Activated CD4-positive, alpha-beta T cell treated with anti-CD3 and anti-CD28 coated beads, Interleukin-2, amount 10 ng/mL, durations not matched to agents 24 days and 14 days (primary cell): ENCODE measurements at regions of chr7 and their contacts with region 1.

Region 1: GRCh38 chr7:47088329-47089067 is 493.4 kb downstream of the TNS3 start:
- DNase-seq: peak; percentile 65
- H3K4me3 Mint-ChIP-seq: no peak overlapping the region
- H3K27ac Mint-ChIP-seq: no peak overlapping the region
- H3K4me1 Mint-ChIP-seq: no peaks in the 10 kb centered on the region
- H3K27me3 Mint-ChIP-seq: no peaks in the 10 kb centered on the region

Region 2: GRCh38 chr7:45890902-45891461 is 1197.5 kb before region 1 on chr7:
- intact Hi-C with region 1: loop called (anchors 5 kb)
- DNase-seq: no peak
- H3K4me3 Mint-ChIP-seq: no peak overlapping the region
- H3K27ac Mint-ChIP-seq: no peak overlapping the region
- H3K4me1 Mint-ChIP-seq: no peaks in the 10 kb centered on the region
- H3K27me3 Mint-ChIP-seq: peaks cover 46% of the 10 kb centered on the region

Region 3: DNA sequence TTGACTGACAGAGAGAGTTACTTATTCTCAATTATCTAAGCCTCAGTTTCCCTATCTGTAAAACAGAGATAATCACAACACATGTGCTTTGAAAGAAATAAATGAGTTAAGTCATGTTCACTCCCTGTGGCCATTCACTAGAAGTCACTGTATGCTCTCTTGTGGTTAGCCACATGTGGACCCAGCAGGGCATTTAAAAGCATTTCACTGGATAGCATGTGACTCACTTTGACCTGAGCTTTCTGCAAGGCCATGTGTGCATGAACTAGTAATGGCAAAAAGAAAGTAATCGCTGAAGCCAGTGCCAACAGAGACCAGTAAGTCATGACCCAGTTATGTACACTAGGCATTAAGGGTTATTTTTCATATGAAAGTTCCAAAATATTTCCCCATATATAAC is 610.5 kb before region 1 on chr7:
- intact Hi-C with region 1: no loop called
- DNase-seq: no peak
- H3K4me3 Mint-ChIP-seq: no peak overlapping the region
- H3K27ac Mint-ChIP-seq: no peak overlapping the region
- H3K4me1 Mint-ChIP-seq: no peaks in the 10 kb centered on the region
- H3K27me3 Mint-ChIP-seq: no peaks in the 10 kb centered on the region

Region 4: GRCh38 chr7:47026780-47027361 is 61.6 kb before region 1 on chr7:
- intact Hi-C with region 1: no loop called
- DNase-seq: peak; percentile 33
- H3K4me3 Mint-ChIP-seq: no peak overlapping the region
- H3K27ac Mint-ChIP-seq: no peak overlapping the region
- H3K4me1 Mint-ChIP-seq: no peaks in the 10 kb centered on the region
- H3K27me3 Mint-ChIP-seq: no peaks in the 10 kb centered on the region